ENCODE measurements at regions of chr20 and their contacts with region 1.

Region 1: DNA sequence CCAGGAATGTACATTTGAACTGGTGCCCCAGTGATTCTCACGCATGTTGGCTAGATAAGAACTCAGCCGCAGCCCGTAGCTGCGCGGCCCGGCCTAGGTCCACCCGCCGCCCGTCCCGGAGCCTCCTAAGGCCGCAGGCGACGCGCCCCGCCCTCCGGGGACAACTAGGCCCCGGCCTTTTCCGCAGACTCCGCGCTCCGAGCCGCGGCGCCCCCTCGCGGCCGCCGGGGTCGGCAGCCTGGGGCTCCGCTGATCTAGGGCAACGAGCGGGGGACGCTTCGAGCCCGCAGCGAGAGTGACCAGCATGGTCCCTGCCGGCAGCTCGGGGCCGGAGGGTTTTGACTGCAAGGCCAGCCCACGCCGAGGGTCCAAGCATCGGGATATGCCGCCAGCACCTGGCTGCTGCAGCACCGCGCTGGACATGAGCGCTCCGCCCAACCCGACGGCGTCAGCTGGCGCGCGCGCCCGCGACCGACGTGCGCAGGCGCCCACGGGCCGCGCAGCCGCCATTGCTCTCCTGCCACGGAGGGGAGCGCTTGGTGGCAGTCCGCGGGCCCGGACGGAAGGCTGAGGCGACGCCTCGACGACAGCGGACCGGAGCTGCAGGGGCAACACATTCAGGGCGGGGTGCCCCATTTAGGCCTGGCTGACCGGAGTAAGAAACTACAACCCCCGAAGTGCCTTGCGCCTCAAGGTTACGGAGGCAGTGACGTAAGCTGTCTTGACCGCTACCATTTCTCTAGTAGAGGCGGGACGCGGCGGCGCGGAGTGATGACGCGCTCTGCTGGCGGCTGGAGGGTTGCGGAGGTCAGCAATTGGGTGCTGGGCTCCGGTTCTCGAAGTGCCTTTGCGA is at the start of gene AP5S1:
- DNase-seq: peak; percentile 98
- ATAC-seq: peak; percentile 78
- H3K4me3 ChIP-seq: peak within 1 kb of the TSS; percentile 85
- H3K27ac ChIP-seq: peak within 1 kb of the TSS; percentile 94
- H3K4me1 ChIP-seq: peaks cover 27% of the 10 kb centered on the region
- H3K27me3 ChIP-seq: no peaks in the 10 kb centered on the region
- CTCF ChIP-seq: peak; percentile 98
- total RNA-seq, gene AP5S1: 28.5 and 31.4 TPM in 2 replicates

Region 2: GRCh38 chr20:3786665-3787323 is 33.5 kb before region 1 on chr20 and contains the start of gene CENPB:
- CTCF ChIA-PET with region 1: interaction called, 16 read pairs
- POLR2A ChIA-PET with region 1: interaction called, 4 read pairs
- intact Hi-C with region 1: loop called (anchors 1 kb)
- DNase-seq: peak; percentile 94
- ATAC-seq: peak; percentile 76
- H3K4me3 ChIP-seq: peak within 1 kb of the TSS; percentile 77
- H3K27ac ChIP-seq: peak within 1 kb of the TSS; percentile 55
- H3K4me1 ChIP-seq: peaks cover 36% of the 10 kb centered on the region
- H3K27me3 ChIP-seq: no peaks in the 10 kb centered on the region
- CTCF ChIP-seq: peak; percentile 73
- total RNA-seq, gene CENPB: 213 and 276 TPM in 2 replicates

Region 3: GRCh38 chr20:3795511-3796468 is 24.5 kb before region 1 on chr20 and contains the start of gene CDC25B:
- CTCF ChIA-PET with region 1: interaction called, 5 read pairs
- POLR2A ChIA-PET with region 1: no interaction called
- intact Hi-C with region 1: loop called (anchors 2 kb)
- DNase-seq: peak; percentile 96
- ATAC-seq: peak; percentile 83
- H3K4me3 ChIP-seq: peak within 1 kb of the TSS; percentile 99
- H3K27ac ChIP-seq: peak within 1 kb of the TSS; percentile 79
- H3K4me1 ChIP-seq: peaks cover 26% of the 10 kb centered on the region
- H3K27me3 ChIP-seq: no peaks in the 10 kb centered on the region
- CTCF ChIP-seq: peak; percentile 50
- total RNA-seq, gene CDC25B: 89.7 and 106 TPM in 2 replicates

Region 4: GRCh38 chr20:3846740-3847428 is 26.6 kb after region 1 on chr20 and contains the start of gene MAVS:
- CTCF ChIA-PET with region 1: no interaction called
- POLR2A ChIA-PET with region 1: no interaction called
- intact Hi-C with region 1: loop called (anchors 2 kb)
- DNase-seq: peak; percentile 88
- ATAC-seq: peak; percentile 86
- H3K4me3 ChIP-seq: peak within 1 kb of the TSS; percentile 94
- H3K27ac ChIP-seq: peak within 1 kb of the TSS; percentile 94
- H3K4me1 ChIP-seq: peaks cover 50% of the 10 kb centered on the region
- H3K27me3 ChIP-seq: no peaks in the 10 kb centered on the region
- CTCF ChIP-seq: no peak
- total RNA-seq, gene MAVS: 38.7 and 44.8 TPM in 2 replicates

Region 5: DNA sequence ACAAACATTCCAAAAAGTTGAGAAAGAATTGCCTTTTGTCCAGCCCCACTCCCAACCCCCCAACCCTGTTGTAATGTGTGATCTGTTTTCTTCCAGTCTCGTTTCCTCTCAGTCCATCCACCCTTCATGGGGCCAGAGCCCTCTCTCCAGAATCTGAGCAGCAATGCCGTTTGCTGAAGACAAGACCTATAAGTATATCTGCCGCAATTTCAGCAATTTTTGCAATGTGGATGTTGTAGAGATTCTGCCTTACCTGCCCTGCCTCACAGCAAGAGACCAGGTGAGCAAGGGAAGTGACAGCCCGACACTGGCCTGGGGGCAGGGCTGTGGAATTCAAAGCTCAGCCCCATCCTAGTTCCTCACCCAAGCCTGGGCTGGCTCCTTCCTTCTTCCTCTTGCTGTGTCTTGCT is 34.2 kb after region 1 on chr20:
- CTCF ChIA-PET with region 1: interaction called, 10 read pairs
- POLR2A ChIA-PET with region 1: no interaction called
- intact Hi-C with region 1: loop called (anchors 2 kb)
- DNase-seq: peak; percentile 33
- ATAC-seq: peak; percentile 70
- H3K4me3 ChIP-seq: no peak overlapping the region
- H3K27ac ChIP-seq: no peak overlapping the region
- H3K4me1 ChIP-seq: 0 out of 2 replicates have a peak, but pooled peaks cover 5% of the 10 kb centered on the region
- H3K27me3 ChIP-seq: no peaks in the 10 kb centered on the region
- CTCF ChIP-seq: no peak

Region 6: DNA sequence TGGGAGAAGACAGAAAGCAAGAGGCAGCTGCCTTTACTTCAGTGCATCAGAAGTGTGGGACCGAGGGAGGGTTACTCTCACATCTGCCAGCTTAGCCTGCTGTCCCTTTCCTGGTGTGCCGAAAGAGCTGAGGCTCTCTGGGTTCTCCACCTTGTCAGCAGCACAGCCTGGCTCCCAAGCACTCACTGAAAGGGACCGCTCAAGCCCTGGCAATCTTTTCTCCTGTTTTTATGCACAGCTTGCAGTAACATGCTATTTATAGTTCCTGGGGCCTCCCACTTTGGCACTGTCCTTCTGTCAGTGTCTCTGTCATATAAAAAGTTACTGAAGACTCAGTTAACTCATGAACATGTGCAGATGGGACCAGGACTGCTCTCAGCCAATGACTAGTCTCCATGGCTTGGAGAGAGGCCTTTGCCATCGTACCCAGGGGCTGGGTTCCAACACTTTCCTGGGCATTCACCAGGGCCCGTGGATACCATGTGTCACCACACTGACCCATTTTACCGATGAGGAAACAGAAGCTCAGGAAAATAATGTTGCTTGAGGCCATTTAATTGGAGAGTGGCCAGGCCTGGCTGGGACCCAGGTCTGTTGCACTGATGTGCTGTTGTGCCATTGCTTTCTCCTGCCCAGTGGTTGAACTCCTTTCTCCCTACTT is 115.2 kb after region 1 on chr20:
- CTCF ChIA-PET with region 1: no interaction called
- POLR2A ChIA-PET with region 1: no interaction called
- intact Hi-C with region 1: no loop called
- DNase-seq: no peak
- ATAC-seq: no peak
- H3K4me3 ChIP-seq: no peak overlapping the region
- H3K27ac ChIP-seq: no peak overlapping the region
- H3K4me1 ChIP-seq: peaks cover 8% of the 10 kb centered on the region; the same call in 1 of the 2 replicates
- H3K27me3 ChIP-seq: no peaks in the 10 kb centered on the region
- CTCF ChIP-seq: no peak

Region 7: DNA sequence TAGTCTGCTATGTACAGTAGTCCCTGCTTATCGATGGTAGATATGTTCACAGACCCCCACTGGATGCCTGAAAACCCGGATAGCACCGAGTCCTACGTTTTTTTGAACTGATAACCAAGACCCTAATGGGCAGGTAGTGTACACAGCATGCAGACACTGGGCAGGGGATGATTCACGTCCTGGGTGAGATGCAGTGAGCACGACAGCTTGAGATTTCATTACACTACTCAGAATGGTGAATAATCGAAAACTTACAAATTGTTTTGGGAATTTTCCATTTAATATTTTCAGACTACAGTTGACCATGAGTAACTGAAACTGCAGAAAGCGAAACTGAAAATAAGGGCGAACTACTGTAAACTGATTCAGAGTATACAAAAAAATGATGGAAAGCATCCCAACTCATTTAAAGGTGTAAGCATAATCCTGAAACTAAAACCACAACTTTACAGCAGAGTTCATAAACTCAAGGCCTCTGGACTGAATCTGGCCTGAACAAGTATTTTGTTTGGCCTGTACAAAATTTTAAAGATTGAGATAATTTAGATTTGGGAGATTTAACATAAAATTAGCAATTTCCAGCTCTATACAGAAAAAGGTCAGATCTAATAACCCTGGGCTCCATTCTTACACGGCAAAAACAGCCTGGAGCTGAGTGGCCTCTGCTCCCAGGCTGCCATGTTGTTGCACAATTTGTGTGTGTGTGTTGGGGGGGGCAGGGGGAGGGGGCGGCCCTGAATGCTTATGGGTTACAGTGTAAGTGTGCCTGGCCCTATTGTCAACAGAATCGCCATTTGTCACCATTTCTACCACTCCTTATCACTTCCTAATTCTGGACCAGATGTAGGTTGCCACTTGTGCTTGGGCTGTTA is 160.2 kb after region 1 on chr20:
- CTCF ChIA-PET with region 1: no interaction called
- POLR2A ChIA-PET with region 1: no interaction called
- intact Hi-C with region 1: no loop called
- DNase-seq: peak; percentile 53
- ATAC-seq: peak; percentile 94
- H3K4me3 ChIP-seq: peak overlapping the region; percentile 38; the same call in 1 of the 2 replicates
- H3K27ac ChIP-seq: peak overlapping the region; percentile 56
- H3K4me1 ChIP-seq: peaks cover 13% of the 10 kb centered on the region
- H3K27me3 ChIP-seq: no peaks in the 10 kb centered on the region
- CTCF ChIP-seq: no peak

Measured in PC-3 (cell line).